ENCODE measurements at regions of chr7 and their contacts with region 1.

Region 1: GRCh38 chr7:107725151-107725740 is 18.7 kb upstream of the CBLL1 start:
- DNase-seq: peak; percentile 78
- H3K4me3 Mint-ChIP-seq: no peak overlapping the region
- H3K27ac Mint-ChIP-seq: no peak overlapping the region
- H3K4me1 Mint-ChIP-seq: no peaks in the 10 kb centered on the region
- H3K27me3 Mint-ChIP-seq: peaks cover 23% of the 10 kb centered on the region
- CTCF ChIP-seq: peak; percentile 60

Region 2: DNA sequence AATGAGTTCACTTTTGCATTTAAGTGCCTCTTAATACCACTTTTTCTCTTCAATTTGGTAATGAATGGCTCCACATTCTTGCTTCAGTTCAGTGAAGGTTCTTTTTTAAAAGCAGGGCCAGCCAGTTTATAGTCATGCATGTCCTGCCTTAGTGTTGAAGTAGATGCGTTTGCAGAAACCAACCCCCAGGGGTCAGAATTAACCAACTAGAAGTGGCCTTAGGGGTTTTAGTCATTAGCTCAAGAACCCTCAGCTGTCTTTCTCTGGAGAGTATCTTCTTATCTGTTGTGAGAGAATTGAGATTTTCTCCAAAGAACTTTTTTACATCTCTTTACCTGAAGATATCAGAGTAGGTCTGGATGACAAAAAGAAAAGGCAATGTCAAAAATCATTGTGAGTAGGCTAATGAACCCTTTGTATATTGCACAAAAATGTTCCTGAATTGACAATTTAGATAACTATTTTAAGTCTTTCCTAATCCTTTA is 778.0 kb before region 1 on chr7:
- CTCF ChIA-PET with region 1: interaction called, 3 read pairs
- POLR2A ChIA-PET with region 1: no interaction called
- intact Hi-C with region 1: loop called (anchors 5 kb)
- DNase-seq: peak; percentile 79
- H3K4me3 Mint-ChIP-seq: no peak overlapping the region
- H3K27ac Mint-ChIP-seq: no peak overlapping the region
- H3K4me1 Mint-ChIP-seq: no peaks in the 10 kb centered on the region
- H3K27me3 Mint-ChIP-seq: peaks cover 68% of the 10 kb centered on the region
- CTCF ChIP-seq: peak; percentile 52

Region 3: GRCh38 chr7:107201795-107202450 is 523.3 kb before region 1 on chr7:
- CTCF ChIA-PET with region 1: interaction called, 3 read pairs
- POLR2A ChIA-PET with region 1: no interaction called
- intact Hi-C with region 1: loop called (anchors 2 kb)
- DNase-seq: peak; percentile 50
- H3K4me3 Mint-ChIP-seq: no peak overlapping the region
- H3K27ac Mint-ChIP-seq: no peak overlapping the region
- H3K4me1 Mint-ChIP-seq: no peaks in the 10 kb centered on the region
- H3K27me3 Mint-ChIP-seq: no peaks in the 10 kb centered on the region
- CTCF ChIP-seq: peak; percentile 55

Region 4: DNA sequence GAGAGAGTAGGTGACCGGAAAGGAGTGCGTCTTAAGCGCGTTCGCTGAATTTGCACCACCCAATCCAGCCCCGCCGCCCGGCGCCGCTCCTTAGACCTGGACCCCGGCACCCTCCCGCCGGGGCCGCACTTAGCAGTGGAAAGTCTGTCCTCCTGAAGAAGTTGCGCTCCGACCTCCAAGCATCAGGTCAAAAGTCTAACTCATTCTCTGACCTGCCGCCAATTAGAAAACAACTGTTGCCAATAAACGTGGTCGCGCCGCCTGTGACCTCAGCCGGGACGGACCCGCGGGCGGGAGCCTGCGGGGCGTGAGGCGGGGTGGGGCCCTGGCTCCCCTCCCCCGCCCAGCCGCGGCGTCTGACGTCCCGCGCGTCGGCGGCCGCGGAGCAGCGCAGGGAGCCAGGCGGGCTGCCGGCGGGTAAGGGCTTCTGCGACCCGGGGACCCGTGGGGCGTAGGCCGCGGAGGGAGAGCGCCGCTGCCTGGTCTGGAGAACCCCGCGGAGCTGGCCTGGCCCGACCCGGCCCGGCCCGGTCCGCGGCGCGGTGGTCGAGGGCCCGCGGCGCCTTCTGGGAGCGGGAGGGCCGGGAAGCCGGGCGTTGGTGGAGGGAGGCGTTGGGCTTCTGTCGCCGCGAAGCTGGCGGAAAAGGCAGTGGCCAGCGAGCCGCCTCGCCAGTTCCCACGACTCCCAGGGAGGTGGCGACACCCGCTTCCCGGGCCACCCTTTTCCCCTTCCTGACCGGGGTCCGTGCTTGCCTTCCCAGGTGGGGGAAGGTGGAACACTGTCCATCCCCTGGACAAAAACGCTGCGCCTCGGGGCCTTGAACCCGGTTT is 145.1 kb before region 1 on chr7 and contains the start of gene BCAP29:
- CTCF ChIA-PET with region 1: interaction called, 3 read pairs
- POLR2A ChIA-PET with region 1: no interaction called
- intact Hi-C with region 1: loop called (anchors 1 kb)
- DNase-seq: peak; percentile 71
- H3K4me3 Mint-ChIP-seq: peak within 1 kb of the TSS; percentile 87
- H3K27ac Mint-ChIP-seq: peak within 1 kb of the TSS; percentile 75
- H3K4me1 Mint-ChIP-seq: peaks cover 20% of the 10 kb centered on the region
- H3K27me3 Mint-ChIP-seq: no peaks in the 10 kb centered on the region
- CTCF ChIP-seq: no peak
- total RNA-seq, gene BCAP29: 61.5 and 73.4 TPM in 2 replicates

Region 5: DNA sequence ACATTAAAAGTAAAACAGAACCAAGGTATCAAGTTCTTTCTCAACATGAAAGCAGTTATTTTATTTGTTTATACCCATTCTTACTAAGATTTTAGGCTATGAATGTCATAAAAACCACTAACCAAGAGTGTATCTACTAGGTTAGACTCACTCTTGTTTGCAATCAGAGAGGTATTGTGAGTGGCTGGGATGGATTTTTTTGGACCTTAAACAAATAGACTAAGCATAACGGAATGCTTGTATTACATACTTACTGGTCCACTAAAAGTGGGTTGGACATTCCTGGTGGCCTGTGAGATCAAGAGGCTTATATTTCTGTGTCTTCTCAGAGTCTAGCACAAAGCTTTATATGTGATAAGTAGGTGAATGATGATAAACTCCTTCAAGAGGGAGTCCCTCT is 13.9 kb before region 1 on chr7:
- CTCF ChIA-PET with region 1: interaction called, 16 read pairs
- POLR2A ChIA-PET with region 1: interaction called, 3 read pairs
- intact Hi-C with region 1: no loop called
- DNase-seq: no peak
- H3K4me3 Mint-ChIP-seq: no peak overlapping the region
- H3K27ac Mint-ChIP-seq: no peak overlapping the region
- H3K4me1 Mint-ChIP-seq: peaks cover 11% of the 10 kb centered on the region
- H3K27me3 Mint-ChIP-seq: no peaks in the 10 kb centered on the region
- CTCF ChIP-seq: no peak

Region 6: DNA sequence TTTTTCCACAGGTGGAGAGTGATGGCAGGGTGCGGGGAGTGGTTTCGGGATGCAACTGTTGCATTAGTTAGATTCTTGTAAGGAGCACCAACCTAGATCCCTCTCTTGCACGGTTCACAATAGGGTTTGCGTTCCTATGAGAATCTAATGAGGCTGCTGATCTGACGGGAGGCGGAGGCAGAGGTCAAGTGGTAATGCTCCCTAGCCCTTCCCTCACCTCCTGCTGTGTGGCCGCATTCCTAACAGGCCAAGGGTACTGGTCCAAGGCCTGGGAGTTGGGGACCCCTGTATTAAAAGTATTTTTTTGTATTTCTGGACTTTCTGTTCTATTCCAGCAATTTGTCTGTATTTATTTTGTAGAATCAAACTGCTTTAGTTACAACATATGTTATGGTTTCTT is 25.9 kb after region 1 on chr7:
- CTCF ChIA-PET with region 1: no interaction called
- POLR2A ChIA-PET with region 1: no interaction called
- intact Hi-C with region 1: no loop called
- DNase-seq: no peak
- H3K4me3 Mint-ChIP-seq: no peak overlapping the region
- H3K27ac Mint-ChIP-seq: no peak overlapping the region
- H3K4me1 Mint-ChIP-seq: no peaks in the 10 kb centered on the region
- H3K27me3 Mint-ChIP-seq: no peaks in the 10 kb centered on the region
- CTCF ChIP-seq: no peak

Region 7: GRCh38 chr7:107939573-107940489 is 214.6 kb after region 1 on chr7:
- CTCF ChIA-PET with region 1: no interaction called
- POLR2A ChIA-PET with region 1: no interaction called
- intact Hi-C with region 1: no loop called
- DNase-seq: peak; percentile 16
- H3K4me3 Mint-ChIP-seq: no peak overlapping the region
- H3K27ac Mint-ChIP-seq: peak overlapping the region; percentile 42
- H3K4me1 Mint-ChIP-seq: peaks cover 11% of the 10 kb centered on the region
- H3K27me3 Mint-ChIP-seq: no peaks in the 10 kb centered on the region
- CTCF ChIP-seq: no peak

Measured in MCF 10A (cell line).